Right cardiac atrium (tissue), 5 donors: ENCODE measurements at regions of chr5 and their contacts with region 1.

Region 1: DNA sequence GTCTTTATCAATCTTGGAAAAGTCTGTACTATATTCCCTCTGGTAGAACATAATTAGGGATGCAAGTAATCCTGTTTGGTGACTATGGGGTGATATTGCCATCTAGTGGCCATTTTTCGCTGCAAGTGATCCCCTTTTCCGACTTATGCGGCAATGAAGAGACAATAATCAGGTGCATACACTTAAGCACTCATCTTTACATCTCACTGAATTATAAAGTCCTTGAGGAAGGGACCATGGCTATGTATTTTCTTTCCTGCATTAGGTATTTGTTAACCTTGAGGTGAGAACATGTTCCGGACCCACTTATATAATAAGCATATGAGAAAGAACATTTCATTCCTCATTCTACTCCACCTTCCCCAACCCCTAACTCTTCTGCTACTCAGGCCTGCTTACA is 19.6 kb upstream of the LIX1 start:
- DNase-seq: peak in 1 of 3 donors; percentile 47
- ATAC-seq: peak; percentile 63 to 76
- H3K4me3 ChIP-seq: no peak overlapping the region
- H3K27ac ChIP-seq: no peak overlapping the region
- H3K4me1 ChIP-seq: no peaks in the 10 kb centered on the region
- H3K27me3 ChIP-seq: no peaks in the 10 kb centered on the region

Region 2: DNA sequence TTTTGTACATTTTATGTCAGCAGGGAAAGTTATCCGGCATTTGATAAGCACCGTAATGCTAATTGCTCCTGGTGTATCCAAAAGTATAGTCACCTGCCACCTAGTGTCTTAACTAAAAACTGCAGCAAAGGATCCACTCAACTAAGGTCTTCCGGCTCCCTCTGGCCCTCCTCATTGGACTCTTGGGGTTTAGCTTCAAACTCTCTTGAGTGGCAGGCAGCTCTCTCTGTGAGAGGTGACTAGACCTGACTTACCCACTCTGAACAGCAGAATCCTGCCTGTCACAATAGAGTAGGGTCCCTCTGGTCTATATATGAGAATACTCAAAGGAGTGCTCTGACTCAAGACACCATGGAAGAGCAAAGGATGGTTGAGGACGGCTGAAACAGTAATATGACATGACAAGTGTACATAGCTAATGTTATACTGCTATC is 560.2 kb before region 1 on chr5:
- intact Hi-C with region 1: loop called in 1 of 4 experiments (anchors 10 kb)
- DNase-seq: no peak
- ATAC-seq: peak; percentile 80 to 84
- H3K4me3 ChIP-seq: no peak overlapping the region
- H3K27ac ChIP-seq: no peak overlapping the region
- H3K4me1 ChIP-seq: no peaks in the 10 kb centered on the region
- H3K27me3 ChIP-seq: no peaks in the 10 kb centered on the region

Region 3: GRCh38 chr5:96614110-96614691 is 547.8 kb before region 1 on chr5:
- intact Hi-C with region 1: loop called in 2 of 4 experiments (anchors 10 kb)
- DNase-seq: peak in 2 of 3 donors; percentile 41
- ATAC-seq: peak; percentile 80 to 94
- H3K4me3 ChIP-seq: no peak overlapping the region
- H3K27ac ChIP-seq: peak overlapping the region; percentile 19
- H3K4me1 ChIP-seq: peaks cover 4% of the 10 kb centered on the region
- H3K27me3 ChIP-seq: no peaks in the 10 kb centered on the region

Region 4: GRCh38 chr5:96752341-96753016 is 409.6 kb before region 1 on chr5:
- intact Hi-C with region 1: loop called in 2 of 4 experiments (anchors 5 kb)
- DNase-seq: no peak
- ATAC-seq: no peak
- H3K4me3 ChIP-seq: no peak overlapping the region
- H3K27ac ChIP-seq: no peak overlapping the region
- H3K4me1 ChIP-seq: no peaks in the 10 kb centered on the region
- H3K27me3 ChIP-seq: no peaks in the 10 kb centered on the region

Region 5: GRCh38 chr5:96763026-96763425 is 399.0 kb before region 1 on chr5:
- intact Hi-C with region 1: loop called in 1 of 4 experiments (anchors 10 kb)
- DNase-seq: no peak
- ATAC-seq: no peak
- H3K4me3 ChIP-seq: no peak overlapping the region
- H3K27ac ChIP-seq: no peak overlapping the region
- H3K4me1 ChIP-seq: no peaks in the 10 kb centered on the region
- H3K27me3 ChIP-seq: no peaks in the 10 kb centered on the region

Region 6: DNA sequence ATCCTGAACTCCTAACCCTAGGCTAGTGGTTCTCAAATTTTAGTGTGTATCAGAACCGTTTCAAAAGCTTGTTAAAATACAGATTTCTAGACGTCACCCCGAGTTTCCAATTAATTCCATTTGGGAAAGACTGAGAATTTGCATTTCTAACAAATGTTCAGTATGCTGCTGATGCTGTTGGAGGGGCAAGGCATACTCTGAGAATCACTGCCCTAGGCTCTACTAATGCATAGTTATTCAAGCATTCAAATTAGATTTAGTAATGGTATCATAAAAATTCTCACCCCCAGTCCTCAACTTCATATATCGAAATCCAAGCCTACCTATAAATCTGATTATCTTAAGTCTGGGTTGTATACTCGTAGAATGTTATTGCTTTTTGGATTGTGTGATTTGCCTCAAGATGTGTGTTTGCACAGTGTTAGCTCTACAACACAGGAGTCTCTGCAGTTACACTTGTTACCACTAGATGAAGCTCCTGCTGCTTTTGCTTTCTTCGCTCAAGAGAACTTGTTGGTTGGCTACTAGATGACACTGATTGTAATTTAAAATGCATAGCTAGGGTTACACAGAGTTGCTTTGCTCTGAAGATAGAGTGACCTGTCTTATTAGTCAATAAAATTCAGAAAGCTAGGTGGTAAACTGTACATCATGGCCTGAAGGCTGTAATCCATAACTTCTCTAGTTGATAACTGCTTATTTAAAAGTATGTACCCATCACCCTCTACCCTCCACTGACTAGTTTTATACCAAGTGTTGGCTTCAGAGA is 293.3 kb before region 1 on chr5:
- intact Hi-C with region 1: loop called in 3 of 4 experiments (anchors 5 to 10 kb)
- DNase-seq: no peak
- ATAC-seq: peak; percentile 84 to 91
- H3K4me3 ChIP-seq: no peak overlapping the region
- H3K27ac ChIP-seq: no peak overlapping the region
- H3K4me1 ChIP-seq: no peaks in the 10 kb centered on the region
- H3K27me3 ChIP-seq: no peaks in the 10 kb centered on the region

Region 7: GRCh38 chr5:96997265-96997859 is 164.7 kb before region 1 on chr5:
- intact Hi-C with region 1: loop called in 1 of 4 experiments (anchors 10 kb)
- DNase-seq: no peak
- ATAC-seq: no peak
- H3K4me3 ChIP-seq: no peak overlapping the region
- H3K27ac ChIP-seq: no peak overlapping the region
- H3K4me1 ChIP-seq: no peaks in the 10 kb centered on the region
- H3K27me3 ChIP-seq: no peaks in the 10 kb centered on the region